Dorsolateral prefrontal cortex (tissue), 120 donors: ENCODE measurements at regions of chr20 and their contacts with region 1.

Region 1: GRCh38 chr20:52312132-52312729 is 120.7 kb upstream of the ZFP64 start:
- DNase-seq: peak in 1 of 10 donors; percentile 35
- H3K4me3 ChIP-seq: no peak overlapping the region
- H3K27ac ChIP-seq: no peak overlapping the region
- H3K27me3 ChIP-seq: peaks cover 0 to 8% (median 0%) of the 10 kb centered on the region in 45 donors
- CTCF ChIP-seq: peak; percentile 57 to 84 (median 74)

Region 2: GRCh38 chr20:53216856-53217576 is 904.8 kb after region 1 on chr20:
- intact Hi-C with region 1: loop called in 1 of 2 experiments (anchors 5 kb)
- DNase-seq: peak; percentile 35 to 78 (median 54)
- H3K4me3 ChIP-seq: peak overlapping the region in 35 of 59 donors; percentile 4 to 52 (median 30)
- H3K27ac ChIP-seq: no peak overlapping the region
- H3K27me3 ChIP-seq: peaks cover 0 to 26% (median 3%) of the 10 kb centered on the region in 45 donors
- CTCF ChIP-seq: peak; percentile 66 to 94 (median 82)